ENCODE measurements at regions of chr12 and their contacts with region 1.

Region 1: DNA sequence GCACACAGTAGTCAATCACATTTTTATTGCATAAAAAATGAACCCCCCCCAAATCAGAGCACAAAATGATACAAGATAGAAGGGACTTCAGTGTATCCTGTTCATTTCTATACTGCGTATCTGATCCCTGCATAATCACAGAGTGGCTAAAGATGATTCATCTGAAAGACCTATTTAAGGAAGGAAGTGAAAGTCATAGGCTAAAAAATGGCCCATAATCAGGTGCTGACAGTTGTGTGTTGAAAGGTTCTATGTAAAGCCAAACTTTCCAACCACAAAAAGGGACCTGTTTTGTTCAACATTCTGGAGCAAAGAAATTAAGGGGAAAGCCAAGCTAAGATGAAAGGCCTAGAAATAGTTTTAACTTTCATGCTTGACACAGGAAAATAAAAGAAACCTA is 147.8 kb upstream of the ATP2B1 start:
- DNase-seq: peak; percentile 75 to 95 (median 91)
- H3K4me3 ChIP-seq: peak overlapping the region in 1 of 7 experiments; percentile 38
- H3K27ac ChIP-seq: peak overlapping the region in 1 of 2 experiments; percentile 23
- H3K4me1 ChIP-seq: peaks cover 15 to 33% (median 23%) of the 10 kb centered on the region in 4 experiments
- H3K27me3 ChIP-seq: no peaks in the 10 kb centered on the region

Region 2: DNA sequence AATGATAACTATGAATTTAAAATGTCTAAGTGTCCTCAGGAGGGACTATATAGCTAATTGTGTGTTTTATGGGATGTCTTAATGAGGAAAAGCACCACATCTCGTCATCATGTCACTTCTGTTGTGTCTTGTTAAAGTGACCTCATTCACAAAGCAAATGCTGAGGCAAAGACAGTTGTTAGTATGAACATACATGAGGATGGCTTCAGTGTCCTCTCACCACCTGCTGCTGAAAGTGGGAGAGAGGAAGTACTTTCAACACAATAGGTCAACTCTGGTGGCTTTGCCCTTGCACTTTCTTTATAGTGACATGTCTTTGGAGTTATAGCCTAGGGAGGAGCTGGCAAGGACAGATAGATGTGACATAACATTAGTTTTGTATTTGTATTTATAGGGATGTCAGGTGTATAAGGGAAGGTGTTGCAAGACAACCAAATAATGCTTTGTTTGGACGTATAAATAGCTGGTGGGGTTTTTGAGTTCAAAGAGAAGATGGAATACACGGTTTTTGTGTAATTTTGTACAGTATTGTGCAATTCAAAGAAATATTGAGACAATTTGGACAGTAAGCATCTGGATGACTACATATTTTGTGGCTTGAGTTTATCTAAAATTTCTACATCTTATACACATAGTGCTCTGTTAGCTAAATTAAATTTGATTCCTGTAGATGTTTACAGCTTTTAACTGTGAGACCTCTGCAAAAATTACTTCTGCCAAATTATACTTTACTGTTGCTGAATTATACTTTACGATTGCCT is 16.1 kb before region 1 on chr12:
- CTCF ChIA-PET with region 1: interaction called, 12 read pairs
- POLR2A ChIA-PET with region 1: no interaction called
- DNase-seq: no peak
- H3K4me3 ChIP-seq: no peak overlapping the region
- H3K27ac ChIP-seq: no peak overlapping the region
- H3K4me1 ChIP-seq: peaks cover 0 to 2% (median 0%) of the 10 kb centered on the region in 4 experiments
- H3K27me3 ChIP-seq: no peaks in the 10 kb centered on the region

Measured in common myeloid progenitor, CD34-positive (primary cell).